ENCODE measurements at regions of chr16 and their contacts with region 1.

Region 1: DNA sequence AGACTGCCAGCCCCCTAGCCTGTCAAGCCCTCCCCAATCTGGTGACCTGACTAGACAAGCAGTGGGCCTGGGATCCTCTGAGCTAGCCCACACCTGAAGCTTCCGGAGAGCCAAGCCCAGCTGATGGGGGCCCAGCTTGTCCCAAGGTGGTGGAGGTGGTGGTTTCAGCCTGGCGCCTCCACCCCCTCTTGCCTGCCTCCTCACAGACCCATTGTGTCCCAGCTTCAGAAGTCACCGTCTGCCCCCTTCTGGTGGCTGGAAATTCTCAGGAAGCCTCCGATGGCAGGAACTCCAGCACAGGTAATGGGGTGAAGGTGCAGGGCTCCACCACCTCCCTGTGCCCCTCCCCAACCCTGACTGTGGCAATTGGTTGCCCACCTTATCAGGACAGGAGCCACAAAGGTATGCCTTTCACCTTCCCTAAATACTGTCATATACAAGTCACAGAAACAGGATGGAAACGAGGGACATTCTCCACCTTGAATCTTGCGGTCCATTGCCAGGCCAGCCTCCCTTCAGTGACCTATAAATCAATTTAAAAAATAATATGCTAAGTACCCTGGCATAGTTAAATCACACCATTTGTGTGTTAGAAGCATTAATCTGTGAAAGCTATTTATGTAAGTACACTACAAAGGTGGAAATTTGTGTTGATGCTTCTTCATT is 66.0 kb upstream of the ZNF423 start:
- DNase-seq: peak; percentile 63
- ATAC-seq: peak; percentile 90
- H3K4me3 ChIP-seq: no peak overlapping the region
- H3K27ac ChIP-seq: no peak overlapping the region
- H3K4me1 ChIP-seq: no peaks in the 10 kb centered on the region
- H3K27me3 ChIP-seq: peaks cover 1 to 17% of the 10 kb centered on the region in 2 experiments; a peak in 4 of 5 replicates
- CTCF ChIP-seq: peak; percentile 94
- EP300 ChIP-seq: no peak
- POLR2A ChIP-seq: no peak
- RAD21 ChIP-seq: peak; percentile 90

Region 2: GRCh38 chr16:49407873-49408550 is 513.9 kb before region 1 on chr16:
- CTCF ChIA-PET with region 1: interaction called, 8 read pairs
- POLR2A ChIA-PET with region 1: no interaction called
- in situ Hi-C with region 1: loop called (anchors 10 kb)
- intact Hi-C with region 1: loop called (anchors 1 kb)
- DNase-seq: peak; percentile 76
- ATAC-seq: peak; percentile 99
- H3K4me3 ChIP-seq: no peak overlapping the region
- H3K27ac ChIP-seq: no peak overlapping the region
- H3K4me1 ChIP-seq: no peaks in the 10 kb centered on the region
- H3K27me3 ChIP-seq: no peaks in the 10 kb centered on the region
- CTCF ChIP-seq: peak; percentile 98
- EP300 ChIP-seq: no peak
- POLR2A ChIP-seq: no peak
- RAD21 ChIP-seq: peak; percentile 93

Region 3: DNA sequence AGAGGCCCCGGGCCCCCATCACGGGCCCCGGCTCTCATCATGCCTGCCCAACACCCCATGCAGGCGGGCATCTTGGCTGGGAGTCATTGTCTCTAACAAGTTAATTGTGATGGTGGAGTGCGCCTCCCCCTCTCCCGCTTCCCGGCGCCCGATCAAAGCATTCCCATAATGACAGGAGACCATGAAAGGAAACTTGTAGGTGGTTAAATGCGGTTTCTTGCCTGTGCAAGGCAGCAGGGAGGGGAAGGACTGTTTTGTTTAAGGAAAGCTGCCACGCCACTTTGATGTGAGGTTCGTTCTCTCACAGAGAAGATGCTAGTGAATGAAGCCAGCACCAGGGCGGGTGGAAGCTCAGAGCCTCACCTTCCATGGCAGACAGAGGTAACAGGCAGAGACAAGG is 502.9 kb before region 1 on chr16:
- CTCF ChIA-PET with region 1: no interaction called
- POLR2A ChIA-PET with region 1: no interaction called
- in situ Hi-C with region 1: loop called (anchors 10 kb)
- intact Hi-C with region 1: no loop called
- DNase-seq: no peak
- ATAC-seq: no peak
- H3K4me3 ChIP-seq: no peak overlapping the region
- H3K27ac ChIP-seq: no peak overlapping the region
- H3K4me1 ChIP-seq: peaks cover 22% of the 10 kb centered on the region
- H3K27me3 ChIP-seq: peaks cover 0 to 16% of the 10 kb centered on the region in 2 experiments; a peak in 3 of 5 replicates
- CTCF ChIP-seq: no peak
- EP300 ChIP-seq: no peak
- POLR2A ChIP-seq: no peak
- RAD21 ChIP-seq: no peak

Region 4: GRCh38 chr16:49491771-49492761 is 429.9 kb before region 1 on chr16:
- CTCF ChIA-PET with region 1: interaction called, 9 read pairs
- POLR2A ChIA-PET with region 1: no interaction called
- in situ Hi-C with region 1: loop called (anchors 10 kb)
- intact Hi-C with region 1: loop called (anchors 5 kb)
- DNase-seq: no peak
- ATAC-seq: peak; percentile 92
- H3K4me3 ChIP-seq: no peak overlapping the region
- H3K27ac ChIP-seq: no peak overlapping the region
- H3K4me1 ChIP-seq: no peaks in the 10 kb centered on the region
- H3K27me3 ChIP-seq: peaks cover 0 to 11% of the 10 kb centered on the region in 2 experiments; a peak in 2 of 5 replicates
- CTCF ChIP-seq: peak; percentile 83
- EP300 ChIP-seq: no peak
- POLR2A ChIP-seq: no peak
- RAD21 ChIP-seq: peak; percentile 62

Region 5: GRCh38 chr16:49556606-49557446 is 365.1 kb before region 1 on chr16:
- CTCF ChIA-PET with region 1: interaction called, 4 read pairs
- POLR2A ChIA-PET with region 1: no interaction called
- in situ Hi-C with region 1: no loop called
- intact Hi-C with region 1: loop called (anchors 5 kb)
- DNase-seq: peak; percentile 44
- ATAC-seq: peak; percentile 83
- H3K4me3 ChIP-seq: no peak overlapping the region
- H3K27ac ChIP-seq: no peak overlapping the region
- H3K4me1 ChIP-seq: no peaks in the 10 kb centered on the region
- H3K27me3 ChIP-seq: peaks cover 0 to 8% of the 10 kb centered on the region in 2 experiments; a peak in 1 of 5 replicates
- CTCF ChIP-seq: peak; percentile 42; the same call in 1 of the 2 replicates
- EP300 ChIP-seq: no peak
- POLR2A ChIP-seq: no peak
- RAD21 ChIP-seq: 0 out of 2 replicates have a peak, but pooled peaks have one; percentile 22

Region 6: DNA sequence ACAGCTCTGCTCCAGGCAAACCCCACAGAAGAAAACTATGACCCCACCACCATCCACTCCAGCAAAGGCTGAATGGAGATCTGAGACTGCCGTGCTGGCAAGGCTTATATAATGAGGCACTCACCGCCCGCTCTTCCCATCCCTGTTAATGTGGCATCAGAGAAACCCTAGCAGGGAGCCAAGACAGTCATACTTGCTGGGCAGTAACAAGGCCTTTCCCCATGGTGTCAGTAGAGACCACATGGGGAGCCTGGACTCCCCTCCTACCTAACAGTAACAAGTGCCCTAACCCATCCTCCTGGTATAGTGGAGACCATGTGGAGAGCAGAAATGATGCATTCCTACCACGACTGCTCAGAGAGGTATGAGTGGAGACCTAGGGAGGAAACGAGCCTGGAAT is 313.1 kb before region 1 on chr16:
- CTCF ChIA-PET with region 1: no interaction called
- POLR2A ChIA-PET with region 1: no interaction called
- in situ Hi-C with region 1: loop called (anchors 5 kb)
- intact Hi-C with region 1: no loop called
- DNase-seq: peak; percentile 39
- ATAC-seq: peak; percentile 82
- H3K4me3 ChIP-seq: no peak overlapping the region
- H3K27ac ChIP-seq: no peak overlapping the region
- H3K4me1 ChIP-seq: no peaks in the 10 kb centered on the region
- H3K27me3 ChIP-seq: peaks cover 0 to 17% of the 10 kb centered on the region in 2 experiments; a peak in 2 of 5 replicates
- CTCF ChIP-seq: peak; percentile 56
- EP300 ChIP-seq: no peak
- POLR2A ChIP-seq: no peak
- RAD21 ChIP-seq: 0 out of 2 replicates have a peak, but pooled peaks have one; percentile 14

Region 7: GRCh38 chr16:49855280-49855821 is 66.6 kb before region 1 on chr16:
- CTCF ChIA-PET with region 1: interaction called, 5 read pairs
- POLR2A ChIA-PET with region 1: no interaction called
- in situ Hi-C with region 1: no loop called
- intact Hi-C with region 1: loop called (anchors 5 kb)
- DNase-seq: no peak
- ATAC-seq: peak; percentile 55
- H3K4me3 ChIP-seq: peak overlapping the region; percentile 59 to 73 (median 68); a peak in 5 of 6 replicates
- H3K27ac ChIP-seq: no peak overlapping the region
- H3K4me1 ChIP-seq: peaks cover 7% of the 10 kb centered on the region
- H3K27me3 ChIP-seq: peaks cover 17 to 79% of the 10 kb centered on the region in 2 experiments
- CTCF ChIP-seq: no peak
- EP300 ChIP-seq: no peak
- POLR2A ChIP-seq: no peak
- RAD21 ChIP-seq: no peak

Region 8: DNA sequence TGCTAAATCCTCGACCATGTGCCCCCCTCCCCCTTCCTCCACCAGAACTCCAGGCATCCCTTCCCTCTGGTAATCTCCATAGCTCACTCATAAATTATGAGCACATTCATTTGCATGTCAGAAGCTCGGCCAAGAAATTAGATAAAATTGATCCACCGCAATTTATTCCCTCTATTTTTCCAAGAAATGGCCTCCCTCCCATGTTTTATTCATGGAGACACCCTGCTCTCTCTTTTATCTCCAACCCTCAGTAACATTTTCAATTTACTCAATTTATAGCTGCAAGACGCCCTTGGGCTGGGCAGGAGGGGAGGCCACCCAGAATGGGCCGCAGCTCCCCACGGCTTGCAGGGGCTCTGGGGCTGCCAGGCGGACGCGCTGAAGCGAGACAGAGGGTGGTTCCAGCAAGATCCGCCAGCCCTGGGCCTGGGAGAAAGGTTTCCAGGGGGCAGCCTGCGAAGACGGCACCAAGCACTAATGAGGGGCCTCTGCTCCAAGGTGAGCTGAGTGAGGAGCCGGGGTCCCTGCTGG is 11.3 kb before region 1 on chr16:
- CTCF ChIA-PET with region 1: no interaction called
- POLR2A ChIA-PET with region 1: no interaction called
- in situ Hi-C with region 1: no loop called
- intact Hi-C with region 1: no loop called
- DNase-seq: no peak
- ATAC-seq: no peak
- H3K4me3 ChIP-seq: no peak overlapping the region
- H3K27ac ChIP-seq: no peak overlapping the region
- H3K4me1 ChIP-seq: no peaks in the 10 kb centered on the region
- H3K27me3 ChIP-seq: peaks cover 2 to 14% of the 10 kb centered on the region in 2 experiments; a peak in 2 of 5 replicates
- CTCF ChIP-seq: no peak
- EP300 ChIP-seq: no peak
- POLR2A ChIP-seq: no peak
- RAD21 ChIP-seq: no peak